H1 (cell line): ENCODE measurements at regions of chr15 and their contacts with region 1.

Region 1: DNA sequence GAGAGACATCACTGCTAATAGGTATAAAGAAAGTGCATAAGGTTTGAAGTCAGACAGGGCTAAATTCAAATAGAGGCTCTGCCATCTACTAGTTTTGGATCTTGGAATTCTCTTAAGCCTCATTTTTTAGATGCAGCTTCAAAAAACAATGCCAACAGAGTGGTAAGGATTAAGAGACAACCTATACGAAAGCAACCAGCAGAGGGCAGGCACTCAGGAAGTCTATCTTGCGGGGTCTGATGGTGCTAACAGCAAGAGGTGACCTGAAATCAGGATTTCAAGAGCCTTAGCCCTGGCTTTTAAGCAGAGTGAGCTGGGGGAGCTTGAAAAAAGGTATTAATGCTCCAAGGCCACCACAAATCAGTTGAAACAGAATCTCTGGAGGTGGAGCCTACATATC is 40.7 kb downstream of the LDHAL6B start:
- DNase-seq: peak; percentile 15 to 65
- H3K4me3 ChIP-seq: no peak overlapping the region
- H3K27ac ChIP-seq: no peak overlapping the region
- H3K4me1 ChIP-seq: peaks cover 0 to 4% (median 0%) of the 10 kb centered on the region in 4 experiments; a peak in 1 of 7 replicates
- H3K27me3 ChIP-seq: no peaks in the 10 kb centered on the region
- CTCF ChIP-seq: peak; percentile 47 to 78 (median 73)
- EP300 ChIP-seq: no peak
- POLR2A ChIP-seq: no peak
- RAD21 ChIP-seq: peak; percentile 76 to 83

Region 2: DNA sequence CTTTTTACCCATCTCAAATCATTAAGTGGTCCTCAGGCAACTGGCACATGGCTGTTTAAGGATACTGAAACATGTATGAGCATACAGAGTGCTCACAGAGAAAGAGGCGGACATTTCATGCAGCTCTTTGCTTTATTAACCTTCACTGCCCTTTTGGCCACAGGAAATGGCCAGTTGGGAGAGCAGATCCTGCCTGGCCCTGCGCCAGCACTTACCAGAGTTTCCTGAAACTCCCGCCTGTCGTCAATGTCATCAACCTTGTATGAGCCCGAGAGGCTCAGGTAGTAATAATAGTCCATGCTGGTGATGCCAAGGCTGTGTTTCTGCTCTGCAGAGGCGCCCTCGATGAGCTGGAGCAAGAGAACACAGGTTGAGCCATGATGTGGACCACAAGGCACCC is 22.9 kb before region 1 on chr15:
- CTCF ChIA-PET with region 1: interaction called, 10 read pairs
- POLR2A ChIA-PET with region 1: no interaction called
- DNase-seq: no peak
- H3K4me3 ChIP-seq: no peak overlapping the region
- H3K27ac ChIP-seq: no peak overlapping the region
- H3K4me1 ChIP-seq: no peaks in the 10 kb centered on the region
- H3K27me3 ChIP-seq: no peaks in the 10 kb centered on the region
- CTCF ChIP-seq: no peak
- EP300 ChIP-seq: no peak
- POLR2A ChIP-seq: no peak
- RAD21 ChIP-seq: no peak

Region 3: DNA sequence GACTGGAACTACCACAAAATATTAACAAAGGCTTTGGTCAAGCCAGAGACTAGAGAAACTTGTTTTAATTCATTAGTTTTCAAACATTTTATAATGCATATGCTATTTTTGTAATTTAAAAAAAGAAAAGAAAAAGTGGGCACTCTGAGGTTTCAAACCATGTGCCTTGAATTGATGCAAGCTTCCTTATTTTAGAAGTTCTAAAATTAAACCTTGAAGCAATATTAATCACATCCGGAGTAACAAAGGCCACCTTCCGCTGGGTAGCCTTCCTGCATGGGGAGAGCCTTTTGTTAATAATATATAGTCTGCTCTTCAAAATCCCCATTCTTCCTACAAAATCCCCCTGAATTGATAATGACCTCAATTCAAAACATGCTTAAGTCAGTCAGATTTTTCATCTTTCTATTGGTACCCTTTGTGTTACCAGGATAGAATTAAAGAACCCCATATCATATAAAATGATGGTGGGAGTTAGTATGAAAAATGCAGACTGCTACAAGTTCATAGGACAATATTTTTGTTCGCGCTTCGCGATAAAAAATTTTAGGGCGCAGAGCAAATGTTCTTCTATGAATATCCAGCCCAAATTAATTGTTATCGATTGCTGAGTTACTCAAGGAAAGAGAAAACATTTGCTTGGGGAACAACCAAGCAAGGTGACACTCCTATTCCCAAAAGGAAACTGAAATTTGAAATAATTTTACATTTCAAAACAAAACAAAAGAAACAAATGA is 10.1 kb before region 1 on chr15:
- CTCF ChIA-PET with region 1: interaction called, 27 read pairs
- POLR2A ChIA-PET with region 1: no interaction called
- DNase-seq: no peak
- H3K4me3 ChIP-seq: no peak overlapping the region
- H3K27ac ChIP-seq: no peak overlapping the region
- H3K4me1 ChIP-seq: peaks cover 0 to 5% (median 3%) of the 10 kb centered on the region in 4 experiments; a peak in 4 of 7 replicates
- H3K27me3 ChIP-seq: no peaks in the 10 kb centered on the region
- CTCF ChIP-seq: no peak
- EP300 ChIP-seq: no peak
- POLR2A ChIP-seq: no peak
- RAD21 ChIP-seq: no peak

Region 4: GRCh38 chr15:59360305-59360704 is 112.9 kb after region 1 on chr15:
- CTCF ChIA-PET with region 1: interaction called, 11 read pairs
- POLR2A ChIA-PET with region 1: no interaction called
- DNase-seq: no peak
- H3K4me3 ChIP-seq: no peak overlapping the region
- H3K27ac ChIP-seq: no peak overlapping the region
- H3K4me1 ChIP-seq: peaks cover 6 to 14% (median 8%) of the 10 kb centered on the region in 4 experiments; a peak in 6 of 7 replicates
- H3K27me3 ChIP-seq: no peaks in the 10 kb centered on the region
- CTCF ChIP-seq: peak; percentile 13 to 69 (median 66); a peak in 2 of 4 replicates
- EP300 ChIP-seq: no peak
- POLR2A ChIP-seq: no peak
- RAD21 ChIP-seq: peak; percentile 16 to 17; a peak in 2 of 4 replicates

Region 5: DNA sequence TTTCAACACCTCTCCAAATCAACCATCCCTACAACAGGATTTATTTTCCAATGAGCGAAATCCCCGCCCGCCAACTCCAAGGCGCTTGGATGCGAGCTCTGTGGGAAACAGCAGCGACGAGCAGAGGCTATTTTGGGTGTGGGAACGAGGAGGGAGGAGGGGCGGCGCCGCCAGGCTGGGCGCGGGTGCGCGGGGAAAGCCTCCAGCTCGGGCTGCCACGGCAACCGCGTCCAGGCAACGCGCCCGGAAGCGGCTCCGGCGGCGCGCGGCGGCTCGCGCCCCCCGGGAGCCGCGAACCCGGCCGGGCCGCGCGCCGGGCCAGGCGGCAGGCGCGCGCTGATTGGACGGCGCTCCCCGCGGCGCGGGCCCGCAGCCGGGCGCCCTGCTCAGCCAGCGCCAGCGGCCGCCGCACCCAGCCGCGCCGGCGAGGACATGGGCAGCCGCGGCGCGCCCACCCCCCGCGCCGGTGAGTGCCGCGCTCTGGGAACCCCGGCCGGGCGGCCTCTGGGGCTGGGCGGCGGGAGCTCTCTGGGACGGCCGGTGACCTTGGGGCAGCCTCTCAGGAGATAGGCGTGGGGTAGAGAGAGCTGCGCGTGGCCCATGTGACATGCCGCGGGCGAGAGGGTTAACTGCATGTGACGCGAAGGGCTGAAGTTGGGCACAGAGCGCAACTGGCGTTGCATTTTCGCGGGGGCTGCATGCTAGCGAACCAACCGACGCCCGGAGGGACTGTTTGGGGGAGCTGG is 190.6 kb after region 1 on chr15 and contains the start of gene FAM81A:
- CTCF ChIA-PET with region 1: interaction called, 12 read pairs
- POLR2A ChIA-PET with region 1: no interaction called
- DNase-seq: peak in 1 of 2 experiments; percentile 78
- H3K4me3 ChIP-seq: peak within 1 kb of the TSS; percentile 56 to 87 (median 70)
- H3K27ac ChIP-seq: no peak within 1 kb of the TSS
- H3K4me1 ChIP-seq: peaks cover 0 to 4% (median 2%) of the 10 kb centered on the region in 4 experiments; a peak in 3 of 7 replicates
- H3K27me3 ChIP-seq: peaks cover 17 to 47% (median 40%) of the 10 kb centered on the region in 4 experiments
- CTCF ChIP-seq: no peak
- EP300 ChIP-seq: no peak
- POLR2A ChIP-seq: no peak
- RAD21 ChIP-seq: no peak
- total RNA-seq, gene FAM81A: 2.0 and 3.0 TPM in 2 replicates

Region 6: GRCh38 chr15:59492389-59493377 is 245.3 kb after region 1 on chr15:
- CTCF ChIA-PET with region 1: interaction called, 55 read pairs
- POLR2A ChIA-PET with region 1: no interaction called
- DNase-seq: peak; percentile 29 to 63
- H3K4me3 ChIP-seq: peak overlapping the region in 1 of 4 experiments; percentile 10; a peak in 2 of 8 replicates
- H3K27ac ChIP-seq: no peak overlapping the region
- H3K4me1 ChIP-seq: peaks cover 0 to 6% (median 2%) of the 10 kb centered on the region in 4 experiments; a peak in 2 of 7 replicates
- H3K27me3 ChIP-seq: no peaks in the 10 kb centered on the region
- CTCF ChIP-seq: peak; percentile 63 to 91 (median 90)
- EP300 ChIP-seq: no peak
- POLR2A ChIP-seq: no peak
- RAD21 ChIP-seq: peak; percentile 98

Region 7: GRCh38 chr15:59501597-59501996 is 254.2 kb after region 1 on chr15:
- CTCF ChIA-PET with region 1: interaction called, 55 read pairs
- POLR2A ChIA-PET with region 1: no interaction called
- DNase-seq: peak; percentile 9 to 63
- H3K4me3 ChIP-seq: no peak overlapping the region
- H3K27ac ChIP-seq: no peak overlapping the region
- H3K4me1 ChIP-seq: no peaks in the 10 kb centered on the region
- H3K27me3 ChIP-seq: no peaks in the 10 kb centered on the region
- CTCF ChIP-seq: peak in 2 of 3 experiments; percentile 90; a peak in 3 of 4 replicates
- EP300 ChIP-seq: no peak
- POLR2A ChIP-seq: no peak
- RAD21 ChIP-seq: peak; percentile 95 to 98